MCF 10A (cell line): ENCODE measurements at regions of chr5 and their contacts with region 1.

Region 1: GRCh38 chr5:130109152-130109551 is 204.9 kb downstream of the CHSY3 start:
- DNase-seq: peak; percentile 65
- H3K4me3 Mint-ChIP-seq: no peak overlapping the region
- H3K27ac Mint-ChIP-seq: no peak overlapping the region
- H3K4me1 Mint-ChIP-seq: no peaks in the 10 kb centered on the region
- H3K27me3 Mint-ChIP-seq: no peaks in the 10 kb centered on the region
- CTCF ChIP-seq: peak; percentile 83

Region 2: GRCh38 chr5:129904102-129904666 is 205.0 kb before region 1 on chr5 and contains the start of gene CHSY3:
- CTCF ChIA-PET with region 1: interaction called, 7 read pairs
- POLR2A ChIA-PET with region 1: interaction called, 3 read pairs
- intact Hi-C with region 1: loop called (anchors 1 kb)
- DNase-seq: peak; percentile 93
- H3K4me3 Mint-ChIP-seq: peak within 1 kb of the TSS; percentile 84
- H3K27ac Mint-ChIP-seq: no peak within 1 kb of the TSS
- H3K4me1 Mint-ChIP-seq: peaks cover 24% of the 10 kb centered on the region
- H3K27me3 Mint-ChIP-seq: peaks cover 27% of the 10 kb centered on the region
- CTCF ChIP-seq: no peak
- total RNA-seq, gene CHSY3: 0.82 and 1.2 TPM in 2 replicates

Region 3: DNA sequence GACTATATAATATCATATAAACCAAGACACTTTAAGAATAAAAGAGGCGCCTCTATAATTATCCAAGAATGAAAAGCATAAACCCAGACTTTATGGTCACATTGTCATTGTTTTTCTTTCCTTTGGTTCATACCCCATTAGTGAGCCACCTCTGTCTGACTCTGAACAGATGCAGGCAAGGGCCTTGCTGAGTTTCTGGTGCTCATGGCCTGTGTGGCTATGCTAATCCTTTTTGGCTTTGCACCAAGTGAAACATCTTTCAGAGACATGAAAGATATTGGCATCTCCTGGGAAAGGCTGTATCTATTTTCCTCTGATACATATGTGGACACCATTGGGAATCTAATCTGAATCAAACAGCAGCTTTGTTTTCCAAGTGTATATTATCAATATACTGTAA is 17.6 kb after region 1 on chr5:
- CTCF ChIA-PET with region 1: interaction called, 15 read pairs
- POLR2A ChIA-PET with region 1: interaction called, 3 read pairs
- intact Hi-C with region 1: no loop called
- DNase-seq: no peak
- H3K4me3 Mint-ChIP-seq: no peak overlapping the region
- H3K27ac Mint-ChIP-seq: no peak overlapping the region
- H3K4me1 Mint-ChIP-seq: peaks cover 9% of the 10 kb centered on the region
- H3K27me3 Mint-ChIP-seq: no peaks in the 10 kb centered on the region
- CTCF ChIP-seq: no peak

Region 4: DNA sequence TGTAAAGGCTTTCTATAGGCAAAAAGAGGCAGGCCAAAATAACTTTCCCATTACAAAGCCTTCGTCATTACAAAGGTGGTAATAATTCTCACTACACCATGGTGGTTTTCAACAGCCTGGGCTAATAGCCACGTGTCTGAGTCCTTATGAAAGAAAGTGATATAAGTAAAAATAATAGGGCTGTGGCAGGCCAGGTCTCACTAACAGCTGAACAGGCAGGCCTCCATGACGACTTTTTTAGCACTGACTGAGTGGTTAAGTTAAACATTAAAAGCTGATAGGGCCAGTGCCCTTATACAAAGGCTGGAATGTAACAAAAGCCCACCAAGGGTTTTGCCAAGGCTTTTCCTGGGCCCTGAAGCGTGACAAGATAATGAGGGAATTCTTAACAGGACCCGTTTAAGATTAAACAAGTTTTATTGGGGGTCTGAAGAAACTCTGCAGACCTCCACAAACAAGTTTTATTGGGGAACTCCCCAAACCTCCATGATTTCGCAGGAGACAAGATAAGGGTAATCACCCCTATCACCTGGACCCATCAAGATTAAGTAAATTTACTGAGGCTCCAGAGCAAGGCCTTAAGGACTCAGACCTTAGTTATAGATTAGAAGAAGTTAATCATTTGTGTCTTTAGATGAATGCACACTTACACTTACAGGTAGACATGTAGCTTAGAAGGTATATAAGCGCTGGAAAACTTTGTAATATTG is 208.0 kb after region 1 on chr5:
- CTCF ChIA-PET with region 1: no interaction called
- POLR2A ChIA-PET with region 1: no interaction called
- intact Hi-C with region 1: no loop called
- DNase-seq: no peak
- H3K4me3 Mint-ChIP-seq: no peak overlapping the region
- H3K27ac Mint-ChIP-seq: no peak overlapping the region
- H3K4me1 Mint-ChIP-seq: no peaks in the 10 kb centered on the region
- H3K27me3 Mint-ChIP-seq: no peaks in the 10 kb centered on the region
- CTCF ChIP-seq: no peak

Region 5: DNA sequence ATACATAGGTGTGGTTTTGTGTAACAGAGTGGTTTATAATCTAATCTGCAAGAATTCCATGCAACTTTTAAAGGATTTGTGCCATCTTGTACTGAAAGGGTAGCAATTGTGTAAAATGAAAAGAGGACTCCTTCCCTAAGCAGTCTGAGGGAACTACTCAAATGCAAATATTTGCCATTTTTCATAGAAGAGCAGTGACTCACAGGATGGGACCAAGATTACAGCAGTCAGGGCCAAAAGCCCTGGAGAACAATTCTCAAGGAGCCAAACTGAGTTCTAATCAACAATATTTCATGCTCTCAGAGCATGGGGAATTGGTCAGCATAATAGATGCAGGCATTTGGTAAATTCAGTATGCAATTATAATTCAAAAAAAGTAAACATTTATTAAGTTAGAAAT is 290.9 kb after region 1 on chr5:
- CTCF ChIA-PET with region 1: no interaction called
- POLR2A ChIA-PET with region 1: no interaction called
- intact Hi-C with region 1: loop called (anchors 1 kb)
- DNase-seq: peak; percentile 43
- H3K4me3 Mint-ChIP-seq: no peak overlapping the region
- H3K27ac Mint-ChIP-seq: peak overlapping the region; percentile 64
- H3K4me1 Mint-ChIP-seq: peaks cover 16% of the 10 kb centered on the region
- H3K27me3 Mint-ChIP-seq: no peaks in the 10 kb centered on the region
- CTCF ChIP-seq: no peak

Region 6: GRCh38 chr5:130720355-130720754 is 611.2 kb after region 1 on chr5:
- CTCF ChIA-PET with region 1: interaction called, 32 read pairs
- POLR2A ChIA-PET with region 1: no interaction called
- intact Hi-C with region 1: loop called (anchors 1 kb)
- DNase-seq: peak; percentile 88
- H3K4me3 Mint-ChIP-seq: no peak overlapping the region
- H3K27ac Mint-ChIP-seq: no peak overlapping the region
- H3K4me1 Mint-ChIP-seq: no peaks in the 10 kb centered on the region
- H3K27me3 Mint-ChIP-seq: no peaks in the 10 kb centered on the region
- CTCF ChIP-seq: peak; percentile 80

Region 7: DNA sequence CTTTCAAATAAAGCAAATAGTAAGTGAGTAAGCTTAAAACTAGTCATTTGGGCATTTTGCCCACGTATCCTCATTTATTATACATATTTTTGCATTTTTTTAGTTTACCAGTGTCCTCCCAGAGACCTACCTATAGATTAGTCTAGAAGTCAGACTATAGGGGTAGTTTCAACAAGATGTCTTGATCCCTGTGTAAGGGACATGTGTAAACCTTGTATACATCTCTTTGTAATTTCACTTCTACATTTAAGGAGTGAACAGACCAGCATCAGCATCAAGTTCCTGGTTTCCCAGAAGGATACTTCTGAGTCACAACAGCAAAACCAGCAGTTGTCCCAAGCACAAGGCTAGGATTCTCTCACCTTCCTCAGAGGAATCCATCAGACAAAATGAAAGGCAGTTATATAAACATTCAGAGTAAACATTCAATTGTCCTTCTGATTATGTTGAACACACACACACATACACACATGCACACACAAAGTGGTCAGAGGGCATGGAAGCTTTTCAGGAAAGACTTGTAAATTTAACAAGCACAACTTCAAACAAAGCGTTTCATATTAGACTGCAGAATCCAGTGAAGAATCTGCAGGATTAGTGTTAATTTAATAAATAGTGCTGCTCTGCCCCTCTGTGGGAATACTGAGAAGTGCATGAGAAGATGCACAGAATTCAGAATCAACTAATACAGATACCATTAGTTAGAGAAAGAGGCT is 1000.5 kb after region 1 on chr5:
- CTCF ChIA-PET with region 1: interaction called, 23 read pairs
- POLR2A ChIA-PET with region 1: no interaction called
- intact Hi-C with region 1: loop called (anchors 1 kb)
- DNase-seq: peak; percentile 74
- H3K4me3 Mint-ChIP-seq: no peak overlapping the region
- H3K27ac Mint-ChIP-seq: no peak overlapping the region
- H3K4me1 Mint-ChIP-seq: peaks cover 5% of the 10 kb centered on the region
- H3K27me3 Mint-ChIP-seq: no peaks in the 10 kb centered on the region
- CTCF ChIP-seq: peak; percentile 89